ACHN (cell line): ENCODE measurements at regions of chr5 and their contacts with region 1.

Region 1: DNA sequence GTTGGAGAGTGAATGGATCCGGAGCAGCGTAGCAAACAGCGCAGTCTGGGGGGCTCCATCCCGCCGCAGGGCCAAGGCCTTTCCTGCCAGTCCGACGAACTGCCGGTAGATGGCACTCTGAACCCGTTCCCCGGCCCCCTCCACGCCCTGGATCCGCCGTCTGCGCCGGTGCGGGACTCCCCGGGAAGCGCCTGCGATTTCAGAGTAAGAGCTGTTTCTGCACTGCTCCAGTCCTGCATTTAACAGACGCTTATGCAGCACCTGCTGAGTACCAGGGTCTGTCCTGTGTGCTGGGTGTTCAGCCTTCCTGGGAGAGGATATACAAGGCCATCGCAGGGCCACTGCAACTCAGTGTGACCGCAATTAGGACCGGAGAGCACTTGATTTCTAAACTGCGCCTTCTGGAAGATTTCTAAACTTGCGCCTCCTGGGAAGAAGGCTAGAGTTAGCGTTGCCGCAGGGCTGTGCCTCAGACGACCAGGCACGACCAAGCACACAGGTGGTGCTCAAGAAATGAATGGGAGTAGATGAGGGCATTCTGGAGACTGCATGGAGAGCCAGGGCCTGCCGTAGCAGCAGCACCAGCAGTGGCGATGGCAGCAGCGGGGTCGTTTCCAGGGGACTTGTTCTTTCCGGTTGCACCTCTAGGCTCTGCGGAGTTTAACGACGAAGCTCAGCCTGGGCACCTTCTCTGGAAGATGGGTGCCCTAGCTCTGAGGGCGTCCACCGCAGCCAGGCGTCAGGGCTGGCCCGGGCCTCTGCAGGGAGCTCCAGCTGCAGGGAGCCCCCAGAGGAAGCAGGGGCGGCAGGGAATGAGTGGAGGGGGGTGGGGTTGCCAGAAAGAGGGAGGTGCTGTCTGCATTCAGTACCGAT is 14.3 kb upstream of the TIFAB start:
- DNase-seq: peak; percentile 57

Region 2: GRCh38 chr5:135551593-135552447 is 85.4 kb after region 1 on chr5:
- in situ Hi-C with region 1: loop called (anchors 10 kb)
- DNase-seq: peak; percentile 67

Region 3: GRCh38 chr5:135729321-135729786 is 262.9 kb after region 1 on chr5:
- in situ Hi-C with region 1: loop called (anchors 25 kb)
- DNase-seq: peak; percentile 34

Region 4: GRCh38 chr5:136232316-136232715 is 765.9 kb after region 1 on chr5:
- in situ Hi-C with region 1: no loop called
- DNase-seq: no peak